ENCODE measurements at regions of chr3 and their contacts with region 1.

Region 1: GRCh38 chr3:137946345-137946973 is 63.5 kb upstream of the CLDN18 start:
- H3K4me3 ChIP-seq: no peak overlapping the region
- H3K27ac ChIP-seq: no peak overlapping the region
- H3K4me1 ChIP-seq: no peaks in the 10 kb centered on the region
- CTCF ChIP-seq: no peak

Region 2: GRCh38 chr3:137854533-137855280 is 91.8 kb before region 1 on chr3:
- CTCF ChIA-PET with region 1: no interaction called
- POLR2A ChIA-PET with region 1: no interaction called
- H3K4me3 ChIP-seq: no peak overlapping the region
- H3K27ac ChIP-seq: no peak overlapping the region
- H3K4me1 ChIP-seq: no peaks in the 10 kb centered on the region
- CTCF ChIP-seq: no peak

Region 3: DNA sequence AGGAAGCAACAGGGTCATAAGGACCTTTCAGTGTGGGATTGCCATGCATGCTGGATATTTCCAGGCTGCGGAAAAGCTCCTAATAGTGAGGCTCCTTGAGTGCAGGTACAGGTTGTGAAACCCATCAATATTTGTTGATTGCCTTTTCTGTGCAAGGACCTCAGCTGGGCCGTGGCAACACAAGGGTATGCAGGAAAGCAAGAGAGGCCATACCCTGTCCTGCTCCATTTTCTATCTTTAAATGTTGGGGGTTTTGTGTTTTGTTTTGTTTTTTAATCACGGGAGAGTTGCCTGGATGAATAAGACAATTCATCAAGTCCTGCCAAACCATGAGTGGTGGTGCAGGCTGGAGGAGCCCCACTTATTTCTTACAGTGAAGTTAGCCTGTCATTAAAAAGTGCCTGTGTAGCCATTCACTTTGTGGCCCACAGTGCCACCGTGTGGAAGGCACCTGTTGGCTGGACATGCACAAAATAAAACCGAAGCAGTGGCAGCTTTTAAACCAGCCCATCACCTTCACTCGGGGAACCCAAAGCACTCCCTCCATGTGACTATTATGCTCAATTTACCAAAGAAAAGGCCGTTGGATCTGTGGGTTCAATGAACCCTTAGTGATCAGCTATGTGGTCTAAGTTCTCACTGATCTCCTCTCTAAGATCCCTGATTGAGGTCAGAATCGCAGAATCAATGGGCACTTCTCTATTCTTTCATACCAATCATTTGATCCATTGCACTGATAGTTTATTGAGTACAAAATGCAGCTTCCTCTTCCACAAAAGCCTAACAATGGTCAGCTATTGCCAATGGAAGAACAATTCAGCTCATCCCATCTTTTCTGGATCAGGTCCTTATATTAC is 105.7 kb after region 1 on chr3:
- CTCF ChIA-PET with region 1: interaction called, 11 read pairs
- POLR2A ChIA-PET with region 1: no interaction called
- H3K4me3 ChIP-seq: no peak overlapping the region
- H3K27ac ChIP-seq: no peak overlapping the region
- H3K4me1 ChIP-seq: no peaks in the 10 kb centered on the region
- CTCF ChIP-seq: peak; percentile 27; the same call in 1 of the 2 replicates

Region 4: DNA sequence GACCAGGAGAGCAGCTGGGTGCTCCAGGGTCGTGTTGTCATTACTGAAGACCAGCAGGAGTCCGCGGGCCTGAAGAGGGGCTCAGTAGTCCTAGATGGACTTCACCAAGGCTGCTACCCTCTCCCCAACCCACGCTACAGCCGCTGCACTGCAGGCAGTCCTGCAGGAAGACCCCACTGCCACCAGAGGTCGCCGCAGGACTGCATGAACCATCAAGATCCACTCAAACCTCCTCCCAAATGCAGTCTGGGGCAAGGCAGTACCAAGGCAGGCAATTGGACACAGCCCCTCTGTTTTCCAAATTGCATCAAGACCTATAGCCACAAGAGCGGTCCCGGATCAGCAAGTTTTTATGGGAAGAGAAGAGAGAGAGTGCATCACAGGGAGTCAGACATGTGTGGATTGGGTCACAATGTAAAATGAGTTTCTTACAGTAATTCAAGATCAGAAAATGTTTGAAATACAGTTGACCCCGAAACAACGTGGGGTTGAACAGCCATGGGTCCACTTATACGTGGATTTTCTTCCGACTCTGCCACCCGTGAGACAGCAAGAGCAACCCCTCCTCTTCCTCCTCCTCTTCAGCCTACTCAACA is 122.2 kb after region 1 on chr3:
- CTCF ChIA-PET with region 1: no interaction called
- POLR2A ChIA-PET with region 1: no interaction called
- H3K4me3 ChIP-seq: no peak overlapping the region
- H3K27ac ChIP-seq: no peak overlapping the region
- H3K4me1 ChIP-seq: no peaks in the 10 kb centered on the region
- CTCF ChIP-seq: peak; percentile 89